CD14-positive monocyte (primary cell): ENCODE measurements at regions of chr2 and their contacts with region 1.

Region 1: GRCh38 chr2:224284134-224284946 is 117.6 kb downstream of the FAM124B start:
- DNase-seq: peak; percentile 1 to 38 (median 11)
- H3K4me3 ChIP-seq: no peak overlapping the region
- H3K4me3 Mint-ChIP-seq: no peak overlapping the region
- H3K27ac ChIP-seq: no peak overlapping the region
- H3K27ac Mint-ChIP-seq: no peak overlapping the region
- H3K4me1 ChIP-seq: no peaks in the 10 kb centered on the region
- H3K4me1 Mint-ChIP-seq: peaks cover 1% of the 10 kb centered on the region
- H3K27me3 ChIP-seq: peaks cover 3 to 17% of the 10 kb centered on the region in 2 donors
- H3K27me3 Mint-ChIP-seq: peaks cover 2 to 16% (median 7%) of the 10 kb centered on the region in 3 donors
- CTCF ChIP-seq: peak; percentile 76

Region 2: DNA sequence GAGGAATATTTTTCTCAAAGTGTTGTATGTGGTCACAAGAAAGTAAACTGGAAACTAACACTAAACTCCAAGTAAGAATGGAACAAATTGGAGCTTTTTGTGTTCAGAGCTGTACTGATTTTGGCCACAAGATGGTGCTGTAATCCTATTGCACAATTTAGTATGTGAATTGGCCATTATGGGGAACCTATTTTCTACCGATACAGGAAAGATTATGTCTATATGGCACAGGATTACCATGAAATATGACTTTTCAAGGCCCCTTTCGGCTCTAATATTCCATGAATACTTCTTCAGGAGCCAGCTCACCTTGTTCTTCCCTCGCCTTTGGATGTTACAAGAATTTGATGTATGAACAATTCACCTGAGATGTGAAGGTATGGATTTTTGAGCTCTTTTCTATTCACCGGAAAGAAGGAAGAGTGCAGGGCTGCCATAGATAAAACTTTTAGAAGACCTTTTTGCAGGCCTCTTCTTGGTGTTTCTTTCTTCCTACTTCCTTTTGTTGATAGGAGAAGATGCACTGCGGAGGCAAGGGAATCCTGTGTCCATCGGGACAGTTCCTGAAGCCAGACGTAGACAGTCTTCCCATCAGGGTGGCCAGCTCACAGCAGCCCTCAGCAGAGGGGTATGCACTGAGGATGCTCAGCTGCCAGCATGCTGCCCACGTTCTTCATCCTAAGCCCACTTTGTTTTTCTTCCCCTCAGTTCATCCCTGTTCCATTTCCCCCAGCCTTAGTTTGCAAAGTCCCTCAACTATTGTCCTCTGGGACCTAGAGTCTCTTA is 313.8 kb before region 1 on chr2:
- intact Hi-C with region 1: loop called in 1 of 2 experiments (anchors 5 kb)
- DNase-seq: peak; percentile 43 to 67 (median 60)
- H3K4me3 ChIP-seq: no peak overlapping the region
- H3K4me3 Mint-ChIP-seq: no peak overlapping the region
- H3K27ac ChIP-seq: no peak overlapping the region
- H3K27ac Mint-ChIP-seq: peak overlapping the region in 1 of 7 donors; percentile 4
- H3K4me1 ChIP-seq: no peaks in the 10 kb centered on the region
- H3K4me1 Mint-ChIP-seq: peaks cover 3% of the 10 kb centered on the region
- H3K27me3 ChIP-seq: no peaks in the 10 kb centered on the region
- H3K27me3 Mint-ChIP-seq: no peaks in the 10 kb centered on the region
- CTCF ChIP-seq: peak; percentile 98

Region 3: DNA sequence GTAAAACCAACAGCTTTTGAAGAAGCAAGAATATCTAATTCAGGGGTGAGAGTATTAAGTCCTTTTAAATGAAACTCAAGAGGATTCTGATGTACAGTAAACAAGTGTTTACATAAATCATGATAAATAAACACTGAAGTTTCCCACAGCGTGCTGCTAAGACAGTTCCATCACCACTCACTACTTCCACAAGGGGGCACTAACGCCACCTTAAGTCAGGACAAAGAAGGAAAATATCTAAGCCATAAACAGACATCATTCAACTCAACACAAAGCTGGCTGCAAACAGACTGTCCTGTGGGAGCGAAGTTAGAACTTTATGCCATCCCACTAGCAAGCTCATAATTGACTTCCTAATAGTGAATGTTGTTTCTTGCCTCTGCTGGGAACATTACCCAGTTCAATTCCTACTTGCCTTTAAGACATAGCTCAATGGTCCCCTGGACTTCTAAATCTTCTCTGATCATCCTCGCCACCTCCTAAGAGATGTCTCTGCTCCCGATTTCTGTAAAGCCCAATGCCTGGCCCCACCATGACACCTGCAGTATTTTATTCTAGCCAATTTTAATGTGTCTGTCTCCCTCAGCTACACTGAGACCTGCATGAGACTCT is 290.6 kb before region 1 on chr2:
- intact Hi-C with region 1: loop called (anchors 5 kb)
- DNase-seq: peak; percentile 34 to 55 (median 51)
- H3K4me3 ChIP-seq: no peak overlapping the region
- H3K4me3 Mint-ChIP-seq: no peak overlapping the region
- H3K27ac ChIP-seq: no peak overlapping the region
- H3K27ac Mint-ChIP-seq: no peak overlapping the region
- H3K4me1 ChIP-seq: no peaks in the 10 kb centered on the region
- H3K4me1 Mint-ChIP-seq: peaks cover 1% of the 10 kb centered on the region
- H3K27me3 ChIP-seq: no peaks in the 10 kb centered on the region
- H3K27me3 Mint-ChIP-seq: no peaks in the 10 kb centered on the region
- CTCF ChIP-seq: peak; percentile 82